H1 (cell line): ENCODE measurements at regions of chr7 and their contacts with region 1.

Region 1: GRCh38 chr7:66837007-66837406 is 84.0 kb upstream of the TMEM248 start:
- DNase-seq: peak; percentile 50 to 79
- H3K4me3 ChIP-seq: no peak overlapping the region
- H3K27ac ChIP-seq: no peak overlapping the region
- H3K4me1 ChIP-seq: no peaks in the 10 kb centered on the region
- H3K27me3 ChIP-seq: no peaks in the 10 kb centered on the region
- CTCF ChIP-seq: peak; percentile 64 to 84 (median 72)
- EP300 ChIP-seq: no peak
- POLR2A ChIP-seq: no peak
- RAD21 ChIP-seq: peak; percentile 81 to 82

Region 2: GRCh38 chr7:66099616-66100474 is 737.2 kb before region 1 on chr7:
- CTCF ChIA-PET with region 1: no interaction called
- POLR2A ChIA-PET with region 1: no interaction called
- DNase-seq: peak; percentile 51 to 66
- H3K4me3 ChIP-seq: peak overlapping the region in 2 of 4 experiments; percentile 6 to 33; a peak in 3 of 8 replicates
- H3K27ac ChIP-seq: no peak overlapping the region
- H3K4me1 ChIP-seq: peaks cover 0 to 3% (median 0%) of the 10 kb centered on the region in 4 experiments; a peak in 1 of 7 replicates
- H3K27me3 ChIP-seq: no peaks in the 10 kb centered on the region
- CTCF ChIP-seq: no peak
- EP300 ChIP-seq: no peak
- POLR2A ChIP-seq: no peak
- RAD21 ChIP-seq: no peak

Region 3: DNA sequence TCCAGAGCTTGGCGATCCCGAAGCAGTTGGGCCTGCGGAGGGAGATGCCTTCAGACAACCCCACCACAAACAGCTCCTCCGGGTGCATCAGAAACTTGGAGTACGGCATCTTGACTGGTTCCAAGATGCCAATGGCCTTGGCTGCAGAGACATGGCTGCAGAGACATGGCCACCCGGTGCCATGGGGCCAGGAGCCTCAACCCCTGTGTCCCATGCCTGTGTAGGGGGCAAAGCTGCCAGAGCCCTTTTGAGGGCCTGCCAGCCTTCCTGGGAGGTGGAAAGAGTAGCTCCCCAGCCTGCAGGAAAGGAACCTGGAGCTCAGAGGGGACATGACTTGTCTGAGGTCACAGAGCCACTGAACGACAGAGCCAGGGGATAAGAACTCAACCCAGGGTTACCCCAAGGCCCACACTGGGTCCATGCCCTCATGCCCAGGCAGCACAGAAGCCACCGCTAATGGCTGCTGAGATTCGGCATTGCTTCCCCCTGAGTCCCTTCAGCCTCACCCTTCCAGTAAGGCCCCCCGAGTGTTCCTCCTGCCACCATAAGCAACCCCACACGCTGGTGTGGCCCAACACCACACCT is 12.9 kb before region 1 on chr7:
- CTCF ChIA-PET with region 1: interaction called, 21 read pairs
- POLR2A ChIA-PET with region 1: no interaction called
- DNase-seq: no peak
- H3K4me3 ChIP-seq: no peak overlapping the region
- H3K27ac ChIP-seq: no peak overlapping the region
- H3K4me1 ChIP-seq: no peaks in the 10 kb centered on the region
- H3K27me3 ChIP-seq: no peaks in the 10 kb centered on the region
- CTCF ChIP-seq: no peak
- EP300 ChIP-seq: no peak
- POLR2A ChIP-seq: no peak
- RAD21 ChIP-seq: no peak

Region 4: GRCh38 chr7:66859794-66860645 is 23.0 kb after region 1 on chr7:
- CTCF ChIA-PET with region 1: no interaction called
- POLR2A ChIA-PET with region 1: no interaction called
- DNase-seq: no peak
- H3K4me3 ChIP-seq: no peak overlapping the region
- H3K27ac ChIP-seq: no peak overlapping the region
- H3K4me1 ChIP-seq: no peaks in the 10 kb centered on the region
- H3K27me3 ChIP-seq: no peaks in the 10 kb centered on the region
- CTCF ChIP-seq: no peak
- EP300 ChIP-seq: no peak
- POLR2A ChIP-seq: no peak
- RAD21 ChIP-seq: no peak